ENCODE measurements at regions of chr4 and their contacts with region 1.

Region 1: DNA sequence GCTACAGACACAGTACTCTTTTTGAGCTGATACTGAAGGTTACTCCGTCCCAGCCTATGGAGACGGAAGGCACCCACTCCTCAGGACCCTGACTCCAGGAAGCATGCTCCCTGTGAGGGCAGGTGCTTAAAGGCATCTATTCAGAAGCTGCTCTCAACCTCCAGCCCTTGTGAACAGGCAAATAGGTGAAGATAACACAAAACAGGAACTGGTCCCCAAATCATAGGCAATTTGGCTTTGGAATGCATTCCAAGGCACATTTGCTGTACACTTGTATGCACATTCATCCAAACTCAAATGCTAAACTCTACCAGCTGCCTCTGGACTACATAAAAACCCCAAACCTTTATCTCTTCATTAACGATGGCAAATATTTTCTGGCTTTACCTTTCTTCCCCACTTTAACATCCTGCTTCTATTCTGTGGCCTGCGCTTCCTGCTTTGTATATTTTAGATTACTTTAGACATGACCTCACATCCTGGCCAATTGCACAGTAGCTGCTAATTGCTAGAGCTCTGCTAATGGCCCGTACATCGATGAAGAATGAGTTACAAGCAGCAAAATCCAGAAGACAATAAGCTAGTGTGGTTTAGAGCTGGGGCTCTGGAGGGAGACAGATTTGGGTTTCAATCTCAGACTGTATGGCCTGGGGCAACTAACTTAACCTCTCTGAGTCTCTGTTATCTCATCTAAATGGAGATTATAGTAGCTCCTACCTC is 3.2 kb downstream of the SEL1L3 start:
- DNase-seq: peak in 30 of 35 experiments; percentile 5 to 73 (median 36)
- ATAC-seq: peak; percentile 69 to 75 (median 74)
- H3K4me3 ChIP-seq: peak overlapping the region in 1 of 2 donors; percentile 13
- H3K4me3 Mint-ChIP-seq: peak overlapping the region; percentile 17 to 100 (median 99)
- H3K27ac ChIP-seq: peak overlapping the region; percentile 88
- H3K27ac Mint-ChIP-seq: peak overlapping the region; percentile 91 to 98
- H3K4me1 ChIP-seq: peaks cover 21 to 62% of the 10 kb centered on the region in 2 experiments
- H3K4me1 Mint-ChIP-seq: peaks cover 62 to 77% (median 74%) of the 10 kb centered on the region in 3 donors
- H3K27me3 ChIP-seq: no peaks in the 10 kb centered on the region
- H3K27me3 Mint-ChIP-seq: no peaks in the 10 kb centered on the region

Region 2: DNA sequence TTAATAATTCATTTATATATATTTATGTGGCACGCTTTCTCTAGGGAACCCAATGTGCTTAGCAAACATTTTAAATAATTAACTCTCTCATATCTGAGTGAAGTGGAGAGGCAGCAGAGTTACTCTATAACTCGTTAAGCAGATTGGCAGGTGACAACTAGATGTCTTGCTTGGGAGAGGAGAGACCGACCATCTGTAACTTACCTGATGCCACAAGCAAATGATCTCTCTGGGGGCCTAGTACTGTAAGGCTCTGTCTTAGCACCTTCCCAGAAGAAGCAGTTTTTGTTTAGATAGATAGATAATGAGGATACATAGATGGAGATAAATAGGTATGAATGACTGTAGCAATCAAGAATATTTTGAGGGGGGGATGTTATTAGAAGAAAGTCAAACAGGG is 15.1 kb after region 1 on chr4:
- CTCF ChIA-PET with region 1: no interaction called
- POLR2A ChIA-PET with region 1: no interaction called
- DNase-seq: no peak
- ATAC-seq: no peak
- H3K4me3 ChIP-seq: no peak overlapping the region
- H3K4me3 Mint-ChIP-seq: no peak overlapping the region
- H3K27ac ChIP-seq: no peak overlapping the region
- H3K27ac Mint-ChIP-seq: no peak overlapping the region
- H3K4me1 ChIP-seq: no peaks in the 10 kb centered on the region
- H3K4me1 Mint-ChIP-seq: peaks cover 0 to 4% (median 4%) of the 10 kb centered on the region in 3 donors
- H3K27me3 ChIP-seq: no peaks in the 10 kb centered on the region
- H3K27me3 Mint-ChIP-seq: peaks cover 1 to 7% of the 10 kb centered on the region in 2 donors

Region 3: DNA sequence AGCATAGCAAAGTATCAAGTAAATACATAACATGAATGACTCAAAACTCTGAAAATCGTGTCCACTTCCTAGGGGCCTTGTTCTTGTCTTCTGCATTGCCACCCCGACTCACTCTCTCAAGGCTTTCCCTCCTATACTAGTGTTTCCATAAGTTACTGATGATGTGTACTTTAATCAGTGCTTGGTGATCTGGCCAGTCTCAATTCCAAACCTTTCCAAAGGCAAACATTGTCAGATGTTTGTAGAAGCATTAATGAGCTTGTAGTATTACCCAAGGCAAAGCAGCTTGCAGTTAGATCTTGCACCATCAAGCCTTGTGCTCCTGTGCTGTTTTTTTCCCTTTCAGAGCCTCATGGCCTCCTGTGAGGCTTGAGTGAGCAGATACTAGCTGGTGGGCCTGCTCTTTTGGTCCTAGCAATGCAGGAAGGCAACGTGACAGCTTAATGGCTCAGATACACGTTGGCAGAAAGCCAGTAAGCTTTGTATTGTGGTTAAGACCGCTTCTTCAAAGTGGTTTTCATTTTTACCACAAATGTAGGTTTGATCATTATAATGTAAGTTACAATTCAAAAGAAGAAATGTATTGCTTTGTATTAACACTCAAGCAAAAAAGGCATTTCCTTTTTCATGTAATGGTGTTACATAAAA is 513.1 kb after region 1 on chr4:
- CTCF ChIA-PET with region 1: interaction called in 1 of 2 experiments, 13 read pairs
- POLR2A ChIA-PET with region 1: no interaction called
- DNase-seq: peak in 34 of 35 experiments; percentile 5 to 82 (median 32)
- ATAC-seq: peak; percentile 43 to 94 (median 90)
- H3K4me3 ChIP-seq: no peak overlapping the region
- H3K4me3 Mint-ChIP-seq: peak overlapping the region in 2 of 3 donors; percentile 1 to 13
- H3K27ac ChIP-seq: no peak overlapping the region
- H3K27ac Mint-ChIP-seq: peak overlapping the region in 1 of 2 donors; percentile 23
- H3K4me1 ChIP-seq: peaks cover 12 to 14% of the 10 kb centered on the region in 2 experiments
- H3K4me1 Mint-ChIP-seq: peaks cover 48 to 62% (median 50%) of the 10 kb centered on the region in 3 donors
- H3K27me3 ChIP-seq: peaks cover 0 to 9% of the 10 kb centered on the region in 2 experiments
- H3K27me3 Mint-ChIP-seq: peaks cover 0 to 2% of the 10 kb centered on the region in 2 donors

Region 4: DNA sequence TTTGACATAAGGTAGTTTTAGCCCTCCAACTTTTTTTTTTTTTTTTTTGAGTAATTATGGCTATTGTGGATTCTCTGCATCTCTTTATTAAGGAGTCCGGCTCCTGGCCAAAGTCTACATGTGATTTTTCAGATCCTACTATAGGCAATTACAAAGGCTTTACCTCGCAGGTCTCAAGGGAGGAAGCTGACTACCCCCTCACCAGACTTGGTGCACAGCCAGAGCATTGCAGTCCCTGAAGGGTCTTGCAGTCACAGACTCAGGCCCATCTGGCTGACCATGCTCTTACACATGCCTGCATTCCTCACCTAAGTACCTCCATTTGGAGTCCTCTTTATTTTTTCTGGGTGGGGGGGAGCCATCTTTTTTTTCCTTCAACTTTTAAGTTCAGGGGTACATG is 912.5 kb after region 1 on chr4:
- CTCF ChIA-PET with region 1: no interaction called
- POLR2A ChIA-PET with region 1: interaction called in 1 of 2 experiments, 14 read pairs
- DNase-seq: no peak
- ATAC-seq: no peak
- H3K4me3 ChIP-seq: no peak overlapping the region
- H3K4me3 Mint-ChIP-seq: no peak overlapping the region
- H3K27ac ChIP-seq: no peak overlapping the region
- H3K27ac Mint-ChIP-seq: no peak overlapping the region
- H3K4me1 ChIP-seq: no peaks in the 10 kb centered on the region
- H3K4me1 Mint-ChIP-seq: no peaks in the 10 kb centered on the region
- H3K27me3 ChIP-seq: no peaks in the 10 kb centered on the region
- H3K27me3 Mint-ChIP-seq: no peaks in the 10 kb centered on the region

Region 5: GRCh38 chr4:27010334-27010940 is 1150.8 kb after region 1 on chr4:
- CTCF ChIA-PET with region 1: no interaction called
- POLR2A ChIA-PET with region 1: no interaction called
- DNase-seq: peak; percentile 13 to 76 (median 52)
- ATAC-seq: peak; percentile 63 to 79 (median 74)
- H3K4me3 ChIP-seq: no peak overlapping the region
- H3K4me3 Mint-ChIP-seq: no peak overlapping the region
- H3K27ac ChIP-seq: no peak overlapping the region
- H3K27ac Mint-ChIP-seq: peak overlapping the region; percentile 73 to 74
- H3K4me1 ChIP-seq: peaks cover 0 to 4% of the 10 kb centered on the region in 2 experiments
- H3K4me1 Mint-ChIP-seq: peaks cover 8 to 26% (median 15%) of the 10 kb centered on the region in 3 donors
- H3K27me3 ChIP-seq: no peaks in the 10 kb centered on the region
- H3K27me3 Mint-ChIP-seq: no peaks in the 10 kb centered on the region

Measured in T-cell (primary cell).